ENCODE measurements at regions of chr3 and their contacts with region 1.

Region 1: DNA sequence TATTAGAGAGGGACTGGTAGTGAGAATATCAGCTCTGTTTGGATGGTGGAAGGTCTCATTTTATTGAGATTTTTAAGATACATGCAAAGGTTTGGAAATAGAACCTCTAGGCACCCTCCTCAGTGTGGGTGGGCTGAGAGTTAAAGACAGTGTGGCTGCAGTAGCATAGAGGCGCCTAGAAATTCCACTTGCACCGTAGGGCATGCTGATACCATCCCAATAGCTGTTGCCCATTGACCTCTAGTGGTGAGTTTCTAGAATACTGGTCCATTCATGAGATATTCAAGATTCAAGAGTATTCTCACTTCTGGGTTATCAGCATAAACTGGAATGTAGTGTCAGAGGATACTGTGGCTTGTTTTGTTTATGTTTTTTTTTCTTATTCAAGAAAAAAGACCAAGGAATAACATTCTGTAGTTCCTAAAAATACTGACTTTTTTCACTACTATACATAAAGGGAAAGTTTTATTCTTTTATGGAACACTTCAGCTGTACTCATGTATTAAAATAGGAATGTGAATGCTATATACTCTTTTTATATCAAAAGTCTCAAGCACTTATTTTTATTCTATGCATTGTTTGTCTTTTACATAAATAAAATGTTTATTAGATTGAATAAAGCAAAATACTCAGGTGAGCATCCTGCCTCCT is 87.2 kb downstream of the TGFBR2 start:
- DNase-seq: peak; percentile 60
- ATAC-seq: peak; percentile 88
- H3K4me3 Mint-ChIP-seq: no peak overlapping the region
- H3K27ac Mint-ChIP-seq: peak overlapping the region; percentile 54
- H3K4me1 Mint-ChIP-seq: peaks cover 50% of the 10 kb centered on the region
- H3K27me3 Mint-ChIP-seq: no peaks in the 10 kb centered on the region

Region 2: GRCh38 chr3:30199096-30199759 is 494.4 kb before region 1 on chr3:
- CTCF ChIA-PET with region 1: interaction called, 29 read pairs
- POLR2A ChIA-PET with region 1: no interaction called
- DNase-seq: peak; percentile 79
- ATAC-seq: peak; percentile 49
- H3K4me3 Mint-ChIP-seq: no peak overlapping the region
- H3K27ac Mint-ChIP-seq: no peak overlapping the region
- H3K4me1 Mint-ChIP-seq: no peaks in the 10 kb centered on the region
- H3K27me3 Mint-ChIP-seq: no peaks in the 10 kb centered on the region

Region 3: GRCh38 chr3:30471066-30471465 is 222.5 kb before region 1 on chr3:
- CTCF ChIA-PET with region 1: no interaction called
- POLR2A ChIA-PET with region 1: no interaction called
- DNase-seq: no peak
- ATAC-seq: no peak
- H3K4me3 Mint-ChIP-seq: no peak overlapping the region
- H3K27ac Mint-ChIP-seq: no peak overlapping the region
- H3K4me1 Mint-ChIP-seq: peaks cover 12% of the 10 kb centered on the region
- H3K27me3 Mint-ChIP-seq: no peaks in the 10 kb centered on the region

Region 4: GRCh38 chr3:30611613-30612436 is 81.8 kb before region 1 on chr3:
- CTCF ChIA-PET with region 1: interaction called, 14 read pairs
- POLR2A ChIA-PET with region 1: no interaction called
- DNase-seq: no peak
- ATAC-seq: peak; percentile 37
- H3K4me3 Mint-ChIP-seq: peak overlapping the region; percentile 87
- H3K27ac Mint-ChIP-seq: peak overlapping the region; percentile 85
- H3K4me1 Mint-ChIP-seq: peaks cover 71% of the 10 kb centered on the region
- H3K27me3 Mint-ChIP-seq: no peaks in the 10 kb centered on the region

Region 5: GRCh38 chr3:30634761-30635735 is 58.5 kb before region 1 on chr3:
- CTCF ChIA-PET with region 1: interaction called, 16 read pairs
- POLR2A ChIA-PET with region 1: no interaction called
- DNase-seq: no peak
- ATAC-seq: no peak
- H3K4me3 Mint-ChIP-seq: peak overlapping the region; percentile 31
- H3K27ac Mint-ChIP-seq: peak overlapping the region; percentile 85
- H3K4me1 Mint-ChIP-seq: peaks cover 97% of the 10 kb centered on the region
- H3K27me3 Mint-ChIP-seq: no peaks in the 10 kb centered on the region

Region 6: GRCh38 chr3:30667280-30667651 is 26.3 kb before region 1 on chr3:
- CTCF ChIA-PET with region 1: interaction called, 11 read pairs
- POLR2A ChIA-PET with region 1: interaction called, 3 read pairs
- DNase-seq: peak; percentile 62
- ATAC-seq: peak; percentile 66
- H3K4me3 Mint-ChIP-seq: peak overlapping the region; percentile 51
- H3K27ac Mint-ChIP-seq: peak overlapping the region; percentile 92
- H3K4me1 Mint-ChIP-seq: peaks cover 94% of the 10 kb centered on the region
- H3K27me3 Mint-ChIP-seq: no peaks in the 10 kb centered on the region

Region 7: GRCh38 chr3:30704931-30705890 is 11.6 kb after region 1 on chr3:
- CTCF ChIA-PET with region 1: interaction called, 13 read pairs
- POLR2A ChIA-PET with region 1: no interaction called
- DNase-seq: no peak
- ATAC-seq: no peak
- H3K4me3 Mint-ChIP-seq: no peak overlapping the region
- H3K27ac Mint-ChIP-seq: no peak overlapping the region
- H3K4me1 Mint-ChIP-seq: peaks cover 5% of the 10 kb centered on the region
- H3K27me3 Mint-ChIP-seq: no peaks in the 10 kb centered on the region

Measured in activated CD8-positive, alpha-beta T cell treated with anti-CD3 and anti-CD28 coated beads, Interleukin-2, amount 10 ng/mL, durations not matched to agents 7 days and 5 days (primary cell).